ENCODE measurements at regions of chr4 and their contacts with region 1.

Region 1: DNA sequence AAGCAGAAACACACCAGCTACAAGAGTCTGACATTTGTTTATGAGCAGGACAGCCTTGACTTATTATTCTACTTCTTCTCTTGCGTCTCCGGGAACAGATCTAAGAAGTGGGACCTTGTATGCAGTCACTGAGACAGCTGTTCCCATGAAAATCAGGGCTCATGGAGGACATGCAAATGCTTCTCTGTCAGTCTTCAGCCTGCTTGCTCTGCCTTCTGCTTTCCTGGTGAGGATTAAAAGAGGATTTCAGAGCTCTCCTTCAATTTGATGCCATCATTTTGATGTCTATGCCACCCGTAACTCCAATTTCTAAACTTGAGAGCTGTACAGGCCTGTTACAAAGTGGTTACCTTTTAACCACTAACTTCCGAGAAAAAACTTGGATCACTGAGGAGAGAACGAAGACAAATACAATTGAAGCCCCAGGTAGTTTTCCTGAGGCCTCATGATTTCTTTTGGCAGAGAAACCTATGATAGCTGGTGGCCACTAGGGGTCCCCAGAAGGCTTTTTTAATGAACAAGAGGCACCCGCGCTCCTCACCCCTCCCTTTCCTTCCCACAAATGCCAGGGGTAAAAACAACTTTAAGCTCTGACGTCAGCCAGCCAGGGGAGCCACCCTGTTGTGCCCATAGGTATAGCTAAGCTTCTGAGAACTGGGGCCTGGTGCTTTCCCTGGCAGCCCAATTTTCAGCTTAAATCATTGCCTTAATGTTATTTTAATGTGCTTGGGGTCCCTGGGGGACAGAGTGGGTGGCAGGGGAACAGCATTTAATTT is 97.0 kb downstream of the DDIT4L start:
- DNase-seq: no peak
- H3K4me3 ChIP-seq: no peak overlapping the region
- H3K27me3 ChIP-seq: no peaks in the 10 kb centered on the region
- CTCF ChIP-seq: peak; percentile 87

Region 2: GRCh38 chr4:99875072-99875471 is 218.2 kb before region 1 on chr4:
- CTCF ChIA-PET with region 1: no interaction called
- POLR2A ChIA-PET with region 1: no interaction called
- DNase-seq: no peak
- H3K4me3 ChIP-seq: no peak overlapping the region
- H3K27me3 ChIP-seq: peaks cover 1% of the 10 kb centered on the region; the same call in 1 of the 2 replicates
- CTCF ChIP-seq: no peak

Region 3: GRCh38 chr4:100082852-100083251 is 10.4 kb before region 1 on chr4:
- CTCF ChIA-PET with region 1: interaction called, 20 read pairs
- POLR2A ChIA-PET with region 1: no interaction called
- DNase-seq: no peak
- H3K4me3 ChIP-seq: no peak overlapping the region
- H3K27me3 ChIP-seq: no peaks in the 10 kb centered on the region
- CTCF ChIP-seq: no peak

Region 4: GRCh38 chr4:100106982-100107381 is 13.7 kb after region 1 on chr4:
- CTCF ChIA-PET with region 1: interaction called, 27 read pairs
- POLR2A ChIA-PET with region 1: no interaction called
- DNase-seq: no peak
- H3K4me3 ChIP-seq: no peak overlapping the region
- H3K27me3 ChIP-seq: no peaks in the 10 kb centered on the region
- CTCF ChIP-seq: no peak

Measured in BJ (cell line).